Gastrocnemius medialis (tissue), 4 donors: ENCODE measurements at regions of chr17 and their contacts with region 1.

Region 1: GRCh38 chr17:29645515-29646051 is 22.9 kb upstream of the CORO6 start:
- DNase-seq: peak; percentile 95 to 97
- ATAC-seq: peak; percentile 55 to 65
- H3K4me3 ChIP-seq: no peak overlapping the region
- H3K27ac ChIP-seq: peak overlapping the region; percentile 97 to 100 (median 98)
- H3K4me1 ChIP-seq: peaks cover 62 to 68% of the 10 kb centered on the region in 2 donors
- H3K27me3 ChIP-seq: no peaks in the 10 kb centered on the region
- CTCF ChIP-seq: no peak
- POLR2A ChIP-seq: peak; percentile 18 to 46

Region 2: DNA sequence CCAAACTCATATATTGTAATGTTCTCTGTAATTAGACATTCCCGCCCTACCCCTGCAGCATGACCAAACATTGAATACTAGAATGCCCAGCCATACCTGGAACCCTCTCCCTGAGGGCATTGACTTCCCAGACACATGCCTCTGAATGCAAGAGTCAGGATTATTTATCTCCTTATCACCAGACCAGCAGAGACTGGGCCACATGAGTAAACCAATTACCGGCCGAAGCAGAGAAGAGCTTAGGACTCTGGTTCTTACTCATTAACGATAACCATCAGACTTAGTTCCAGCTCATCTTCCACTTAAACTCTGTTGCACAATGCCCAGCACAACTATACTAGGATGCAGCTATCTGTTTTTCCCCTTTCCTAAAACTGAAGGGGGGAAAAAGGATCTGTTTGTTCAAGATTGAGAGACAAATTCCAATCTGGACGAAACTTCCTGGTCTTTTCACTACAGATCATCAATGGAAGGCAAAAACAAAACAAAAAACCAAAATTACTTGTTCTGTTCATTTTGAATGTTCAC is 65.4 kb after region 1 on chr17:
- in situ Hi-C with region 1: loop called in 1 of 4 experiments (anchors 10 kb)
- intact Hi-C with region 1: no loop called
- DNase-seq: peak in 1 of 2 donors; percentile 30
- ATAC-seq: peak; percentile 10 to 31
- H3K4me3 ChIP-seq: peak overlapping the region in 2 of 4 donors; percentile 6 to 21
- H3K27ac ChIP-seq: peak overlapping the region; percentile 82 to 100 (median 93)
- H3K4me1 ChIP-seq: peaks cover 81 to 83% of the 10 kb centered on the region in 2 donors
- H3K27me3 ChIP-seq: no peaks in the 10 kb centered on the region
- CTCF ChIP-seq: no peak
- POLR2A ChIP-seq: peak; percentile 48 to 72

Region 3: DNA sequence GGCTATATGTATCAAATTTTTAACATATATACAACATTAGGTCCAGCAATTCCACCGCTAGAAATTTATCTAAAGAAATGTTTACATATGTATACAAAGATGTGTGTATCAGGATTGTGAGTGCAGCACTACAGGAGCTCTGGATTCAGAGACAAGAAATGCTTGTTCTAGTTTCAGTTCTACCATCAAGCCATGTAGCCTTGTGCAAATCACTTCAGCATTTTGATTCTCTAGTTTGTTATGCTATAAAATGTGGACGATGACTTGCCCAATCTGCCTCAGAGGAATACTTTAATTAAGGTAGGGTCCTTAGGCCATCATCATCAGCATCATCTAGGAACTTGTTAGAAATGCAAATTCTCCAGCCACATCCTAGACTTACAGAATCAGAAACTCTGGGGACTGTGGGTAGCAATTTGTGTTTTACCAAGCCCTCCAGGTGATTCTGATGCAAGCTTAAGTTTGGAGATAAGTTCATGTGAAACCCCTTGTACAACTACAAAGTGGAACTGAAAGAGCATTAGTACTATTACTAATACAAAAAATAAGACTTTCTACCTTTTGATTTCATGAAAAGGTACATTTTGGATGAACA is 108.4 kb after region 1 on chr17:
- in situ Hi-C with region 1: loop called in 2 of 4 experiments (anchors 10 kb)
- intact Hi-C with region 1: no loop called
- DNase-seq: no peak
- ATAC-seq: no peak
- H3K4me3 ChIP-seq: no peak overlapping the region
- H3K27ac ChIP-seq: peak overlapping the region; percentile 4 to 97 (median 92)
- H3K4me1 ChIP-seq: peaks cover 31 to 42% of the 10 kb centered on the region in 2 donors
- H3K27me3 ChIP-seq: no peaks in the 10 kb centered on the region
- CTCF ChIP-seq: no peak
- POLR2A ChIP-seq: no peak

Region 4: GRCh38 chr17:29760761-29761696 is 115.4 kb after region 1 on chr17:
- in situ Hi-C with region 1: loop called in 3 of 4 experiments (anchors 10 kb)
- intact Hi-C with region 1: loop called (anchors 5 kb)
- DNase-seq: peak; percentile 84 to 91
- ATAC-seq: peak; percentile 77 to 80
- H3K4me3 ChIP-seq: peak overlapping the region; percentile 68 to 88 (median 78)
- H3K27ac ChIP-seq: peak overlapping the region; percentile 90 to 97 (median 93)
- H3K4me1 ChIP-seq: peaks cover 33 to 52% of the 10 kb centered on the region in 2 donors
- H3K27me3 ChIP-seq: no peaks in the 10 kb centered on the region
- CTCF ChIP-seq: peak in 1 of 5 experiments; percentile 6
- POLR2A ChIP-seq: peak; percentile 92 to 96

Region 5: GRCh38 chr17:29771551-29771950 is 126.0 kb after region 1 on chr17:
- in situ Hi-C with region 1: loop called in 2 of 4 experiments (anchors 10 kb)
- intact Hi-C with region 1: no loop called
- DNase-seq: no peak
- ATAC-seq: no peak
- H3K4me3 ChIP-seq: no peak overlapping the region
- H3K27ac ChIP-seq: peak overlapping the region; percentile 70 to 84 (median 79)
- H3K4me1 ChIP-seq: peaks cover 14 to 21% of the 10 kb centered on the region in 2 donors
- H3K27me3 ChIP-seq: no peaks in the 10 kb centered on the region
- CTCF ChIP-seq: no peak
- POLR2A ChIP-seq: no peak